HepG2 (cell line): ENCODE measurements at regions of chr15 and their contacts with region 1.

Region 1: GRCh38 chr15:82985688-82986441 is at the start of gene RAMAC:
- DNase-seq: peak; percentile 96
- ATAC-seq: peak; percentile 98
- H3K4me3 ChIP-seq: peak within 1 kb of the TSS; percentile 73 to 94 (median 88)
- H3K27ac ChIP-seq: peak within 1 kb of the TSS; percentile 75
- H3K4me1 ChIP-seq: peaks cover 30% of the 10 kb centered on the region
- H3K27me3 ChIP-seq: no peaks in the 10 kb centered on the region; a peak in 1 of 5 replicates
- CTCF ChIP-seq: no peak
- EP300 ChIP-seq: no peak
- POLR2A ChIP-seq: peak; percentile 74 to 76
- RAD21 ChIP-seq: no peak
- total RNA-seq, gene RAMAC: 45.9 and 71.7 TPM in 2 replicates

Region 2: GRCh38 chr15:82849556-82850512 is 136.0 kb before region 1 on chr15:
- CTCF ChIA-PET with region 1: no interaction called
- POLR2A ChIA-PET with region 1: interaction called, 3 read pairs
- in situ Hi-C with region 1: loop called (anchors 10 kb)
- intact Hi-C with region 1: loop called (anchors 5 kb)
- DNase-seq: peak; percentile 73
- ATAC-seq: peak; percentile 91
- H3K4me3 ChIP-seq: peak overlapping the region in 1 of 3 experiments; percentile 18; a peak in 1 of 6 replicates
- H3K27ac ChIP-seq: no peak overlapping the region
- H3K4me1 ChIP-seq: peaks cover 19% of the 10 kb centered on the region
- H3K27me3 ChIP-seq: no peaks in the 10 kb centered on the region; a peak in 1 of 5 replicates
- CTCF ChIP-seq: peak; percentile 88
- EP300 ChIP-seq: no peak
- POLR2A ChIP-seq: no peak
- RAD21 ChIP-seq: peak; percentile 42; the same call in 1 of the 2 replicates

Region 3: DNA sequence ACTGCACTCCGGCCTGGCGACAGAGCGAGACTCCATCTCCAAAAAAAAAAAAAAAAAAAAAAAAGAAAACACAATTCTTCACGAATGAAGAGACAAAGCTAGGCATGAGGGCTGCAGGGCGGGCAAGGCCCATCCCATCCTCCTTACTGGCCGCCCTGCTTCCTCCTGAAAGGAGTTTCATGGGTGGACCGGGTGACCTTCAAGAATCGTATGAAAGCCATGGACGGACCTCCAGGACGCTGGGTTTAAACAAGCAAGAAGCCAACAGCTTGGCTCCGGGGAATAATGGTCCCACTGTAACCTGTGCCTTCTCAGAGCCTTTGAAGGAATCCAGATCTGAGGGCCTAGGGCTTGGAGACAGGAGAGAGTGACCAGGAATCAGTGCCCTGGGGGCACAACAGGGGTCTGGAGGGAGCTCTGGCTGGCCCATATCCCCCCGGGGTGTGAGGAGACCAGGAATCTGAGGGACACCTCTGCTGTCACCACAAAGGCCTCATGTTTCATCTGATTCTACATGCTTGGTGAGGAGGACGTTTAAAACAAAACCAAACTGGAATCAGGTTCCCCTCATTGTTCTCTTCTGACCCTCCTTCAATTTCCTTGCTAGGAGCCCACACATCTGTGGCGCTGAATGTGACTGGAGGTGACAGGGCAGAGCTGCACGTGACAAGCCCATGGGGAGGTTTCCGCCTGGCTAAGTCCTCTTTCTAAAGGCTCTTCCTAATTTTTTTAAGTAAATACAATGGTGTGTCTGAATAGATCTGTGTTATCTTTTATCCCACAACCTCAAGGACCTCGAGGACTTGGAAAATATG is 130.4 kb before region 1 on chr15:
- CTCF ChIA-PET with region 1: no interaction called
- POLR2A ChIA-PET with region 1: interaction called, 7 read pairs
- in situ Hi-C with region 1: loop called (anchors 10 kb)
- intact Hi-C with region 1: loop called (anchors 5 kb)
- DNase-seq: no peak
- ATAC-seq: no peak
- H3K4me3 ChIP-seq: no peak overlapping the region
- H3K27ac ChIP-seq: peak overlapping the region; percentile 42
- H3K4me1 ChIP-seq: peaks cover 27% of the 10 kb centered on the region
- H3K27me3 ChIP-seq: no peaks in the 10 kb centered on the region; a peak in 1 of 5 replicates
- CTCF ChIP-seq: no peak
- EP300 ChIP-seq: no peak
- POLR2A ChIP-seq: no peak
- RAD21 ChIP-seq: no peak

Region 4: DNA sequence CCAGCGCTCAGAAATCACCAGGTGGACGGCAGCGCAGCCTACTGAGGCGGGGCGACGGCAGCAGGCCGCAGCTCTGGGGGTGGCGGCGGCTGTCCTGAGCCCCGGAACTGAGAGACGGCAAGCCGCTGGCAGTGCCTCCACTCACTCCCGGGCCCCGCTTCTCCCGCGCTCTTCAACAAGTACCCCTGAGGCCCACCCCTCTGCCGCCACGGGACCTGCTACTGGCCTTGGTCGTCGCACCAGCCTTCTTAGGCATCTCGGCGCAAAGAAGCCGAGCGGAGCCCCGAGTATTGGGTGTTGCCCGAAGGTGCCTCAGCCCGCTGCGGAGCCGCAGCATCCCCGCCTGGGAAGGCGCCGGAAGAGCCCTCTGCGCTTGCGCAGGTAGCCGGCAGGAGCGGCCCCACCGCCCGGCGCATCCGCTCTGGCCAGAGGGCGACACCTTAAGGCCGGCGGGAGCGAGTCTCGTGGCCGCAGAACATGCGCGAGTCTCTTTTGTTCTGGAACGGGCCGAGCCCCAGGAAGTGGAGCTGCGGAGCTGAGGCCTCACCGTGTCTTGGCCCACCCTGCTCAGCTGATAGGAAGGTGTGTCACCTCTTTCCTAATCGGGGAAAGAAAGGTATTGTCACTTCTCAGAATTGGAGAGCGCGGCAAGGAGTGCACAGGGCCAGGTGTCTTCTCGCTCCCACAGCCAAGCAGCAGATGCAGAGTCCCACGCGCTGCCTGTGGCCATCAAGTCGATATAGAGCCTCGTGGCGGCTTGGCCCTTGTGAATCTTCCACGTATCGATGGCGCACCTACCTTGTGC is 25.6 kb after region 1 on chr15 and contains the start of gene C15orf40:
- CTCF ChIA-PET with region 1: no interaction called
- POLR2A ChIA-PET with region 1: interaction called, 21 read pairs
- in situ Hi-C with region 1: no loop called
- intact Hi-C with region 1: no loop called
- DNase-seq: peak; percentile 81
- ATAC-seq: peak; percentile 96
- H3K4me3 ChIP-seq: peak within 1 kb of the TSS; percentile 63 to 88 (median 66)
- H3K27ac ChIP-seq: peak within 1 kb of the TSS; percentile 63
- H3K4me1 ChIP-seq: peaks cover 33% of the 10 kb centered on the region
- H3K27me3 ChIP-seq: no peaks in the 10 kb centered on the region
- CTCF ChIP-seq: peak; percentile 96
- EP300 ChIP-seq: no peak
- POLR2A ChIP-seq: peak; percentile 77 to 86
- RAD21 ChIP-seq: peak; percentile 61
- total RNA-seq, gene C15orf40: 24.0 and 25.5 TPM in 2 replicates